H1 (cell line): ENCODE measurements at regions of chr7 and their contacts with region 1.

Region 1: DNA sequence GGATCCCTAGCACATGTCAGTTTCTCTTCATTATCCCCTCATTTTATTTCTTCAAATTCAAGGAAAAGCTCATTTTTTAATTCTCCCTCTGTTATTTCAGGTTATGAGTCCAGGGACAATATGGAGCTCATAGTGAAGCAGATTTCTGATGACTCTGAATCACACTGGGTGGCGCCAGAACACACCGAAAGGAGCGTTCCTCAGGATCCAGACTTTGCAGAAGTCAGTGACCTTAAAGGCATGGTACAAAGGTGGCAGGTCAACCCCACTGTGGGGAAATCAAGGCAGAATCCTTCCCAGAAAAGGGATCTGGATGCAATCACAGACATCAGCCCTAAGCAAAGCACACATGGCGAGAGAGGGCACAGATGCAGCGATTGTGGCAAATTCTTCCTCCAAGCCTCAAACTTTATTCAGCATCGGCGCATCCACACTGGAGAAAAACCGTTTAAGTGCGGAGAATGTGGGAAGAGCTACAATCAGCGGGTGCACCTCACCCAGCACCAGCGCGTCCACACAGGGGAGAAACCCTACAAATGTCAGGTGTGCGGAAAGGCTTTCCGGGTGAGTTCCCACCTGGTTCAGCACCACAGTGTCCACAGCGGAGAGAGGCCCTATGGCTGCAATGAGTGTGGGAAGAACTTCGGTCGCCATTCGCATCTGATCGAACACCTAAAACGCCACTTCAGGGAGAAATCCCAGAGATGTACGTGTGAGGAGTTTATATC is 21.4 kb downstream of the ZKSCAN5 start:
- DNase-seq: peak in 1 of 2 experiments; percentile 47
- H3K4me3 ChIP-seq: no peak overlapping the region
- H3K27ac ChIP-seq: no peak overlapping the region
- H3K4me1 ChIP-seq: no peaks in the 10 kb centered on the region
- H3K27me3 ChIP-seq: no peaks in the 10 kb centered on the region
- CTCF ChIP-seq: peak; percentile 37 to 49 (median 45)
- EP300 ChIP-seq: no peak
- POLR2A ChIP-seq: no peak
- RAD21 ChIP-seq: peak; percentile 71 to 78

Region 2: DNA sequence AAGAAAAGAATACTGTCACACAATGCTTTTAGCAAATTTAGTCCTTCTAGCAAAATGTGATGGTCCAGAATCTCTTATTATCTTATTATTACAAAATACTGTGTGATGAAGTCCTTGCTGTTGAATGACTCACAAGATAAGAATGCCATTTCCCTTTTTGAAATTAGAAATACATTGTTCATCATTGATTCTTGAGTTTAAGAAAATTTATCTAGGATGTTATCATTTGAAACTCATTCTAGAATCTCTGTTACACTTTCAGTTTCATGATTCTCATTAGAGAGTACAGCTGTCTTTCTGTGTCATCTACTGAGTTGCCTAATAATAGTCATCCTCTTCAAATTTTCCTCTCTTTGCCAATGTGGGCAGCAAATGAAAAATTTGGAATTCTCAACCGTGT is 11.8 kb before region 1 on chr7:
- CTCF ChIA-PET with region 1: interaction called, 24 read pairs
- POLR2A ChIA-PET with region 1: interaction called, 10 read pairs
- DNase-seq: no peak
- H3K4me3 ChIP-seq: no peak overlapping the region
- H3K27ac ChIP-seq: no peak overlapping the region
- H3K4me1 ChIP-seq: no peaks in the 10 kb centered on the region
- H3K27me3 ChIP-seq: no peaks in the 10 kb centered on the region
- CTCF ChIP-seq: no peak
- EP300 ChIP-seq: no peak
- POLR2A ChIP-seq: no peak
- RAD21 ChIP-seq: no peak

Region 3: DNA sequence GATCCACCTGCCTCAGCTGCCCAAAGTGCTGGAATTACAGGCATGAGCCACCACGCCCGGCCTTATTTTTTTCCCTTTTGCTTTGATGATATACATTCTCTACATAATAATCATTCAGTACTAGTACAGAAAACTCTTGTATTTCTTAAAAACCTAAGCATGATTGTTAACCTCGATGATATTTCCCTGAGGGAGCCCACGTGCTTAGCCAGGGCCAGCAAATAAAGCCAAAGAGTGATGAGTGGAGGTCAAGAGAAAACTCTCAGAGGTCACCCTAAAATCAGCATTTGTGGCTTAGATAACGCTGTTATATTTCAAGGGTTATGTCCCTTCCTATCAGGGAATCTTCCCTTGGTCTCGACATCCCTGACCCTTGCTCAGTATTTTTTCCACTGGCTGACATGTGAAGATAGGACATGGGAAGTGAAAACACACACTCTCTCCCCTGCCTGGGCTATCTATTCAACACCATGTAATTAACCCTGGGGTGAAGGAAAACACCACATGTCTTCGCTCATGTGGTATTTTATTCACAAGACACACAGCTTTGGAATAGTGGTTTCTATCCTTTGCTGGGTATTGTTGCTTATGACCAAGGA is 13.4 kb after region 1 on chr7:
- CTCF ChIA-PET with region 1: interaction called, 11 read pairs
- POLR2A ChIA-PET with region 1: interaction called, 5 read pairs
- DNase-seq: no peak
- H3K4me3 ChIP-seq: no peak overlapping the region
- H3K27ac ChIP-seq: no peak overlapping the region
- H3K4me1 ChIP-seq: no peaks in the 10 kb centered on the region
- H3K27me3 ChIP-seq: no peaks in the 10 kb centered on the region
- CTCF ChIP-seq: no peak
- EP300 ChIP-seq: no peak
- POLR2A ChIP-seq: no peak
- RAD21 ChIP-seq: no peak

Region 4: DNA sequence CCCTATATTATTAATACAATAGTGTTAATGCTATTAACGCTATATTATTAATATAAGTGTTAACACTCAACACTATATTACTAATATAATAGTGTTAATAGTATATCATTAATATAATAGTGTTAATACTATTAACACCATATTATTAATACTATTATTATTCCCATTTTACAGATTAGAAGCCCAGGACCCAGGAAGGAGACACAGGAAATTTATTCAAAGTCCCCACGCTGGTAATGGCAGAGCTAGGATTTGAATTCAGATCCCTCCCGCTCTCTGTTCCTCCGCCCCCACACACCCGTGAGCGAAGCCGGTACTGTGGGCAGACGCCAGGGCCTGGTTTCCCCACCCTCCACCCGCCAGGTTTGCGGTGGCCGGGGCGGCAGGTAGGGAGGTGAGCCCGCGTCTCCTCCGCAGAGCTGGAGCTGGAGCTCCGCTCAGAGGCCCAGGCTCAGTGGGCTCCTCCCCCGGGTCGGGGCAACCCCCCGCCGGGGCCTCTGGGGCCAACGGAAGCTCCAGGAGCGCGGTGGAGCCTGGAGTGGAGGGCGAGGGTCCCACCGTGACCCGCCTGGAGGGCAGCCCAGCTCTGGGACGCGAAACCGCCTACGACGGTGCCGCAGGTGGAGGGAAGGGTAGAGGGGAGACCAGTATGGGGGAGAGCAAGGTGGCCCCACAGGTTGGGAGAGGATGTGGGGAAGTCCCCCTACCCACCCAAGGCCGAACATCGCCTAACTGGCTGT is 72.1 kb after region 1 on chr7 and contains the start of gene TMEM225B:
- CTCF ChIA-PET with region 1: interaction called, 16 read pairs
- POLR2A ChIA-PET with region 1: no interaction called
- DNase-seq: peak in 1 of 2 experiments; percentile 55
- H3K4me3 ChIP-seq: no peak within 1 kb of the TSS
- H3K27ac ChIP-seq: no peak within 1 kb of the TSS
- H3K4me1 ChIP-seq: peaks cover 0 to 3% (median 2%) of the 10 kb centered on the region in 4 experiments; a peak in 3 of 7 replicates
- H3K27me3 ChIP-seq: no peaks in the 10 kb centered on the region
- CTCF ChIP-seq: no peak
- EP300 ChIP-seq: no peak
- POLR2A ChIP-seq: no peak
- RAD21 ChIP-seq: no peak
- total RNA-seq, gene TMEM225B: not detected in 2 replicates

Region 5: DNA sequence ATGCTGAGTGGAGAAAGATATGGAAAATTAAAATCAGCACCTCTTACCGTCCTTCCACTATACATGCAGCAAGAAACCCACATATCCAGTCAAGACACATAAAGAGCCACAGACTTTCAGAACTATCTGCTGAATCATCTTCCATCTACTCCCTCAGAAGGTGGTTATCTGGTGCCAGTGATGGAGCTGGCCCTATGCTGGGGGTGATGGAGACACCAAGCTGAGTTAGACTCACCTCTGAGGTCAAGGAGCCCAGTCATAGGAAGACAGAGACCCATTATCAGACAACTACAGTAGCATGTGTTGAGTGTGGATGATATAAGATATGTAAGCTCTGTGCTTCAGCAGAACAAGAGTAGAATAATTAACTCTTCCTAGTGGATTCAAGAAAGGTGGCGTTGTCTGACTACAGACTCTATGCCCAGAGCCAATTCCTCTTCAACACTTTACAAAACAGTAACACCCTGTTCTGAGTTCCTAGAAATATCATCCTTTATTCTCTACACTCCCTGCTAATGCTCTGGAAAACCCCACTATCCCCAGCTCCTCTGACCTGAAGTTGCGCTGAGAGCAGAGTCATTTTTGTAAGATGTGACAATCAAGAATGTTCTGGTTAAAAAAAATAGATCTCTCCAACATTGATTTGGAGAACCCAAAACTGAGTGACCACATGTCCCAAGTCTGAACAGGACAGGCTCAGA is 139.6 kb after region 1 on chr7:
- CTCF ChIA-PET with region 1: no interaction called
- POLR2A ChIA-PET with region 1: no interaction called
- DNase-seq: no peak
- H3K4me3 ChIP-seq: no peak overlapping the region
- H3K27ac ChIP-seq: no peak overlapping the region
- H3K4me1 ChIP-seq: no peaks in the 10 kb centered on the region
- H3K27me3 ChIP-seq: no peaks in the 10 kb centered on the region
- CTCF ChIP-seq: no peak
- EP300 ChIP-seq: no peak
- POLR2A ChIP-seq: no peak
- RAD21 ChIP-seq: no peak